B cell (primary cell): ENCODE measurements at regions of chr16 and their contacts with region 1.

Region 1: DNA sequence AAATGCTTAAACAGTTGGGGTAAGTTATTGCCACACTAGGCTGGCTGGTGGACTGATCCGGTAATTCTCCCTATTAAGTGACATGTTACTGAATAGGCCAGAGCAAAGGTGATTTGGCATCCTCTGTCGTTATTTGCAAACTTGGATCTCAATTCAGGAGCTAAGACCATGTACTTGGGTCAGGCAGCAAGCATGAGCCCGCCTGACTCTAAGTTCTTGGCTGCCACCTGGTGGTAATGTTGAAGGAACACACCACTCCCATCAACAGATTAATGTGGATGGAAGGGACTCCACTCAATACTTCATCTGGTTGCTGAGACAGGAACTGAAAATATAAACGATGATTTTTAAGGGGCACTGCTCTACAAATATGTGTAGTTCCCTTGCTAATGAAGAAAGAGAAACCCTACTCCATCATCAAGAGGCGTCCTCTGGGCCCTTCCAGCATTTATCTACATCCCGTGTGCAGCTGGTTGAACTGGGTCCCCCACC is 70.8 kb downstream of the EMP2 start:
- DNase-seq: peak; percentile 87
- ATAC-seq: peak; percentile 95
- H3K4me3 ChIP-seq: no peak overlapping the region
- H3K4me3 Mint-ChIP-seq: no peak overlapping the region
- H3K27ac ChIP-seq: no peak overlapping the region
- H3K27ac Mint-ChIP-seq: peak overlapping the region; percentile 75
- H3K4me1 ChIP-seq: peaks cover 4 to 10% of the 10 kb centered on the region in 2 donors
- H3K4me1 Mint-ChIP-seq: peaks cover 16% of the 10 kb centered on the region
- H3K27me3 ChIP-seq: no peaks in the 10 kb centered on the region
- H3K27me3 Mint-ChIP-seq: no peaks in the 10 kb centered on the region
- CTCF ChIP-seq: peak; percentile 84

Region 2: GRCh38 chr16:8567750-8568617 is 1941.6 kb before region 1 on chr16:
- CTCF ChIA-PET with region 1: no interaction called
- POLR2A ChIA-PET with region 1: no interaction called
- intact Hi-C with region 1: loop called (anchors 1 kb)
- DNase-seq: peak; percentile 86
- ATAC-seq: peak; percentile 93
- H3K4me3 ChIP-seq: no peak overlapping the region
- H3K4me3 Mint-ChIP-seq: no peak overlapping the region
- H3K27ac ChIP-seq: no peak overlapping the region
- H3K27ac Mint-ChIP-seq: peak overlapping the region; percentile 34
- H3K4me1 ChIP-seq: peaks cover 0 to 6% of the 10 kb centered on the region in 2 donors
- H3K4me1 Mint-ChIP-seq: peaks cover 7% of the 10 kb centered on the region
- H3K27me3 ChIP-seq: peaks cover 0 to 3% (median 0%) of the 10 kb centered on the region in 4 experiments
- H3K27me3 Mint-ChIP-seq: peaks cover 16% of the 10 kb centered on the region
- CTCF ChIP-seq: peak; percentile 100

Region 3: DNA sequence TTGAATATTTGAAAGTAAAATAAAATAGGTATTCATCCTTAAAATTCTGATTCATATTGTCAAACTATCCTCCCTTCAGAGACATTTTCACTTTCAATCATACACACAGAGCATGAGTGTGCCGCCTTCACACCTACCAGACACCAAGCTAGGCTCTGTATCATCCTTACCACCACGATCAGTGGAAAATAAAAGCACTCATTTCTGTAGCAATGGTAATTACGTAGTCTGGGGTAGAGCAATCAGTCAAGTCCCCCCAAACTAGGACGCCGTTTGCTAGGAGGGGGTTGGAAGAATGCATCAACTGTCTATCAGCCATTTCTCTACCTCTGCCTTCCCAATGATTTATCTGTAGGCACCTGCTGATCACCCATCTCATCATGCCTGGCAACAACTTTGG is 242.8 kb before region 1 on chr16:
- CTCF ChIA-PET with region 1: interaction called, 29 read pairs
- POLR2A ChIA-PET with region 1: no interaction called
- intact Hi-C with region 1: no loop called
- DNase-seq: no peak
- ATAC-seq: no peak
- H3K4me3 ChIP-seq: no peak overlapping the region
- H3K4me3 Mint-ChIP-seq: peak overlapping the region; percentile 11
- H3K27ac ChIP-seq: no peak overlapping the region
- H3K27ac Mint-ChIP-seq: peak overlapping the region; percentile 7
- H3K4me1 ChIP-seq: peaks cover 4 to 5% of the 10 kb centered on the region in 2 donors
- H3K4me1 Mint-ChIP-seq: peaks cover 7% of the 10 kb centered on the region
- H3K27me3 ChIP-seq: no peaks in the 10 kb centered on the region
- H3K27me3 Mint-ChIP-seq: no peaks in the 10 kb centered on the region
- CTCF ChIP-seq: no peak

Region 4: DNA sequence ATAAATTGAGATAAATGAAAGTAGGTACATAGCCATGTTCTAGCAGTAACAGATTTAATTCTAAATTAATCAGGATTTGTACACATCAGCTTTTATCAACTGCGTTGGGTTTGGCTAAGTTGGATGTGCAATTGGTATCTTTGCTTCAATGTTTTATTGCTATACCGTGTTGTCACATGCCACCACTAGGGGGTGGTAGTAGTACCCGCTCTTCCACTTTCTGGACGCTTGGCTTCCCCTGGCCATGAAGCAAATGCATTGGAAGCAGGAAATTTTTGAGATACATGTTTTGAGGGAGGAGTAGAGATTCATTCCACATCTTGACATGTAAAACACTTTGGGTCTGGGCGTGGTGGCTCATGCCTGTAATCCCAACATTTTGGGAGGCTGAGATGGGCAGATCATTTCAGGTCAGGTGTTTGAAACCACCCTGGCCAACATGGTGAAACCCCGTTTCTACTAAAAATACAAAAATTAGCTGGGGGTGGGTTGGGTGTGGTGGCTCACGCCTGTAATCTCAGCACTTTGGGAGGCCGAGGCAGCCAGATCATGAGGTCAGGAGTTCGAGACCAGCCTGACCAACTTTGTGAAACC is 12.2 kb after region 1 on chr16:
- CTCF ChIA-PET with region 1: interaction called, 27 read pairs
- POLR2A ChIA-PET with region 1: no interaction called
- intact Hi-C with region 1: no loop called
- DNase-seq: peak; percentile 72
- ATAC-seq: peak; percentile 80
- H3K4me3 ChIP-seq: no peak overlapping the region
- H3K4me3 Mint-ChIP-seq: no peak overlapping the region
- H3K27ac ChIP-seq: no peak overlapping the region
- H3K27ac Mint-ChIP-seq: no peak overlapping the region
- H3K4me1 ChIP-seq: peaks cover 0 to 3% of the 10 kb centered on the region in 2 donors
- H3K4me1 Mint-ChIP-seq: peaks cover 2% of the 10 kb centered on the region
- H3K27me3 ChIP-seq: no peaks in the 10 kb centered on the region
- H3K27me3 Mint-ChIP-seq: no peaks in the 10 kb centered on the region
- CTCF ChIP-seq: peak; percentile 93

Region 5: DNA sequence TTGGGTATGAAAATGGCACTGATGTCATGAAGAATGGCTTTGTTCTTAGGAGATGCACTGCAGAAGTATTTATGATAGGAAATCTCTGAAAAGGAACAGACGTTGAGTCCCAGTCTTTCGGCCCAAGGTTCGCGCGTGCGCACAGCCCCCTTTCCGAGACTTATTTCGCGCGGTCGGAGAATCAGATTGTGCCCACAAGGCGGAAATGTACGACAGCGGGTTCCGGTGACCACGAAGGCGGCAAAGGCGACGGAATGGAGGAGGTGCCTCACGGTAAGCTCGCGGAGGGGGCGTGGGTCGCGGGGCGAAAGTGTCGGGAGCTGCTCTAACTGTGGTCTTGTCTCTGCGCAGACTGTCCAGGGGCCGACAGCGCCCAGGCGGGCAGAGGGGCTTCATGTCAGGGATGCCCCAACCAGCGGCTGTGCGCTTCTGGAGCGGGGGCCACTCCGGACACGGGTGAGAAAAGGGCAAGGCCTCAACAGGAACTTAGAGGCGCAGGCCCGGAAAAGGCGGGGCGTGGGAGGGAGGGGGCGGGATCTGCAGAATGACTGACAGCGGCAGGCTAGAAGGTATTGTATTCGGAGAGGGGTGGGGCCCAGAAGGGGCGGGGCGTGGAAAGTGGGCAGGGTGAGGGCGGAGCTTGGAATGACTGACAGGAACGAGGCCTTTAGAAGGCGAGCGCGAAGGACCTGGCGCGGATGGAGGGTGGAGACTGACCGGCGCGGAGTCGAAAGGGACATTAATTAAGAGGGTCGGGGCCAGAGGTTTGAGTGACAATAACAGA is 234.2 kb after region 1 on chr16 and contains the start of gene NUBP1:
- CTCF ChIA-PET with region 1: interaction called, 203 read pairs
- POLR2A ChIA-PET with region 1: interaction called, 5 read pairs
- intact Hi-C with region 1: no loop called
- DNase-seq: peak; percentile 100
- ATAC-seq: peak; percentile 93
- H3K4me3 ChIP-seq: peak within 1 kb of the TSS; percentile 61 to 85 (median 73)
- H3K4me3 Mint-ChIP-seq: peak within 1 kb of the TSS; percentile 93
- H3K27ac ChIP-seq: peak within 1 kb of the TSS; percentile 93 to 97
- H3K27ac Mint-ChIP-seq: peak within 1 kb of the TSS; percentile 97
- H3K4me1 ChIP-seq: peaks cover 31 to 37% of the 10 kb centered on the region in 2 donors
- H3K4me1 Mint-ChIP-seq: peaks cover 55% of the 10 kb centered on the region
- H3K27me3 ChIP-seq: no peaks in the 10 kb centered on the region
- H3K27me3 Mint-ChIP-seq: no peaks in the 10 kb centered on the region
- CTCF ChIP-seq: no peak
- total RNA-seq, gene NUBP1: 54.3 and 67.3 TPM in 2 replicates

Region 6: DNA sequence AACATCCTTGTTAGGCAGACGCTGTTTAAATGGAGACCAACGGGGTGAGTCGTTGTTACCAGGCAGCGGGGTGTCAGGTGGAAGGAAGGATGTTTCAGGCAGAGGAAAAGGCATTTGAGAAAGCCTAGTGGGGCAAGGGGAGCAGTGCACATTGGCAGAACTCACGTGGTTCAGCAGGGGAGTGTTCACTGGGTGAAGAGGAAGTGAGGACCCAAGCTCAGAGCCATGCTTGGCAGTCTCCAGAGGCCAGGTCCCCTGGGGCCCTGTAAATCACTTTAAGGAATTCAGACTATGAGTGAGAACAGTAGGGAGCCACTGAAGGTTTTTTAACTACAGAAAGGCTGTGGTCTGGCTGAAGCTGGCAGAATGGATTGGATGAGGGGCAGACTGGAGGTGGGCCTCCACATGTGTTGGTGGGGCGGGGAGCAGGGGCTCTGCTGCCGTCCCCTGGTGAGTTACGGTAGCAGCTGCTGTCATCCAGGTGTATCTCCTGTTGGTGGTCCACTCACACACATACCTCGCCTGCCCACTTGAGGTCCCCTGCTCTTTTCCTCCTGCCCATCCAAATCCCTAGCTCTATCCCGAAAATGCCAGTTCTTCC is 439.9 kb after region 1 on chr16:
- CTCF ChIA-PET with region 1: interaction called, 12 read pairs
- POLR2A ChIA-PET with region 1: no interaction called
- intact Hi-C with region 1: no loop called
- DNase-seq: peak; percentile 91
- ATAC-seq: peak; percentile 91
- H3K4me3 ChIP-seq: peak overlapping the region in 2 of 5 experiments; percentile 8 to 14
- H3K4me3 Mint-ChIP-seq: peak overlapping the region; percentile 80
- H3K27ac ChIP-seq: peak overlapping the region; percentile 67 to 78
- H3K27ac Mint-ChIP-seq: peak overlapping the region; percentile 96
- H3K4me1 ChIP-seq: peaks cover 52 to 63% of the 10 kb centered on the region in 2 donors
- H3K4me1 Mint-ChIP-seq: peaks cover 75% of the 10 kb centered on the region
- H3K27me3 ChIP-seq: no peaks in the 10 kb centered on the region
- H3K27me3 Mint-ChIP-seq: no peaks in the 10 kb centered on the region
- CTCF ChIP-seq: peak; percentile 59